ENCODE measurements at regions of chr11 and their contacts with region 1.

Region 1: GRCh38 chr11:12914400-12914912 is 94.7 kb upstream of the RASSF10 start:
- DNase-seq: no peak
- H3K4me3 ChIP-seq: no peak overlapping the region
- CTCF ChIP-seq: peak; percentile 86

Region 2: DNA sequence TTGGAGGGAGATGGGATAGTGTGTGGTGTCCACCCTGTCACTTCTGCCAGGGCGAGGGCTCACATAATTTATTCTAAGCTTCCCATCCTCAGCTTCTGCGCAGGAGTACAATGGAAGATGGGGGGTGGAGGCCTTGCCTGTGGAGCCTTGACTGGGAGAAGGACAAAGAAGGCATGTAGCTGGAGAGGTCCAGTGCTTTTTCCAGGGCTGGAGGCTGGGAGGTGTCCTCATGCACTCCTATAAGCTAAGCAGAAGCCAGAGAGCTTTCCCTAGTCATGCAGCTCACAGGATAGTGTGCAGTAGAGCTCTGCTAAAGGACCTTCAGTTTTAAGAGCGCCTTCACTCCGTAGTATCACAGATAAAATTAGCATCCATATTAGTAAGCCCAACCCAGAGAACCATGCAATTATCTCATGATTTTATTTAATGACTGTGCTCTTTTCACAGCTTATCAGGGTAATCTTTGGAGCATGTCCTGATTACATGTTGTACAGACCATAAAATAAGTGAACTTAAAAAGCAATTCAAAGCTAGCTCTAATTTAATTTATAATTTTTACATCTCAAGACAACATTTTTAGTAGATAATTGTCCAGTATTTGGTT is 91.9 kb before region 1 on chr11:
- CTCF ChIA-PET with region 1: no interaction called
- POLR2A ChIA-PET with region 1: no interaction called
- DNase-seq: no peak
- H3K4me3 ChIP-seq: no peak overlapping the region
- CTCF ChIP-seq: no peak

Region 3: GRCh38 chr11:12900496-12900895 is 14.0 kb before region 1 on chr11:
- CTCF ChIA-PET with region 1: interaction called, 52 read pairs
- POLR2A ChIA-PET with region 1: interaction called, 4 read pairs
- DNase-seq: peak; percentile 89
- H3K4me3 ChIP-seq: no peak overlapping the region
- CTCF ChIP-seq: no peak

Region 4: DNA sequence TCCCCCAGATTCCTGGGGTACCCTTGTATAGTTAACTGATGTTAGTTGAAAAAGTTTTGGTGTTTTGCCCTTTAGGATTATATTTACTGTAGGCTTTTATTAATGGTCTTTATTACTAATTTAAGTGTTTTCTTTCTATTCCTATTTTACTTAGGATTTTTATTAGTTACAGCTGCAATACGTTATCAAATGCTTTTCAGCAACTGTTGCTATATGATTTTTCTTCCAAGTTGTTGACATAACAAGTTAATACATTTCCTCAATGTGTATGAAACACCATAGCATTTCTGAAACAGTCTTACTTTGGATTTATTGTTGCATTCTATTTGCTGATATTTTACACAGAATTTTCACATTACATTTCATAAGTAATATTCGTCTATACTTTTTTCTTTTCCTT is 13.4 kb after region 1 on chr11:
- CTCF ChIA-PET with region 1: interaction called, 14 read pairs
- POLR2A ChIA-PET with region 1: interaction called, 3 read pairs
- DNase-seq: no peak
- H3K4me3 ChIP-seq: no peak overlapping the region
- CTCF ChIP-seq: no peak